Thyroid gland (tissue), 4 donors: ENCODE measurements at regions of chr5 and their contacts with region 1.

Region 1: GRCh38 chr5:59055745-59056448 is 473.0 kb downstream of the RAB3C start:
- DNase-seq: no peak
- H3K4me3 ChIP-seq: no peak overlapping the region
- H3K27ac ChIP-seq: no peak overlapping the region
- H3K4me1 ChIP-seq: no peaks in the 10 kb centered on the region
- H3K27me3 ChIP-seq: no peaks in the 10 kb centered on the region
- CTCF ChIP-seq: no peak
- POLR2A ChIP-seq: no peak

Region 2: GRCh38 chr5:58886315-58887207 is 169.3 kb before region 1 on chr5:
- intact Hi-C with region 1: no loop called
- DNase-seq: peak; percentile 45 to 62
- H3K4me3 ChIP-seq: no peak overlapping the region
- H3K27ac ChIP-seq: peak overlapping the region in 1 of 3 donors; percentile 34
- H3K4me1 ChIP-seq: peaks cover 3 to 5% of the 10 kb centered on the region in 2 donors
- H3K27me3 ChIP-seq: no peaks in the 10 kb centered on the region
- CTCF ChIP-seq: peak; percentile 66 to 95 (median 74)
- POLR2A ChIP-seq: no peak

Region 3: DNA sequence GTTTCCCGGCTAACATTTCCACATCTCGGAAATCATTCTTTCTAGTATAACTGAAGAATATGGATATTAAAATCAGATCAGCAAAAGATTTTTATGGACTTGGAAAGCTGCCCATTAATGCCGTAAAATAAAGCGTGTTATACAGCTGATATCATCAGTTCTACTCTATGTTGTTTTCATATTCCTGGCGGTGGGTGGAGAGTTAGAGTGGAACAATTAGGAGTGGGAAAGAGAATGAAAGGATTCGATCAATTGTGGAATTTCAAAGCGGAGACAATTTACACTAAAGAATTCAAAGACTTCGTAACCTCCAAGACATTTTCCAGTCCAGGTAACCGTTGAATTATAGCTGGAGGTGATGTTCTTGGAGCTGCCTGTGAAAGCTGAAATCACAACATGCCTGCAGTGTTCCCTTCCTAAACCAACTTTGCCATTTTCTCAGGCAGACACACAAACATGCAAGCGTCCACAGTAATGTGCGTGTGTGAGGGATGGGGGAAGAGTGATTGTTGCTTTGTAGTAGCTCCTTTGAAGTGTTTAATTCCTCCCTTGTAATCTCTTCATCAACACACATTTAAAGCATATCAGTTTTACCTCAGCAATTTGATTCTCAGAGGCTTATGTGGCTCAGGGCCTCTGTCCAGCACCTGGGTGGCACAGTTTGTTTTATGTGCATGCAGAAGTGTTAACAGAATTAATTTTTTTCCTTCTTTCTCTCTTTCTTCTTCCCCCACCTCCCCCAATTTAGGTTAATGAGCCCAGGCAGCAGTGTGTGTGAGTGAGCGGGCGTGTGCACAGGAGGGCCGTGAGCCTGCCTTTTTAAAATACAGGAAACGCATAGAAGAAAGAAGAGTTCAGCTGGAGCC is 71.0 kb after region 1 on chr5:
- intact Hi-C with region 1: no loop called
- DNase-seq: peak; percentile 36
- H3K4me3 ChIP-seq: peak overlapping the region in 1 of 3 donors; percentile 16
- H3K27ac ChIP-seq: peak overlapping the region; percentile 90 to 99 (median 96)
- H3K4me1 ChIP-seq: peaks cover 33 to 50% of the 10 kb centered on the region in 2 donors
- H3K27me3 ChIP-seq: no peaks in the 10 kb centered on the region
- CTCF ChIP-seq: no peak
- POLR2A ChIP-seq: peak in 1 of 2 donors; percentile 56

Region 4: GRCh38 chr5:59174248-59174844 is 118.4 kb after region 1 on chr5:
- intact Hi-C with region 1: loop called (anchors 10 kb)
- DNase-seq: peak; percentile 19 to 32
- H3K4me3 ChIP-seq: no peak overlapping the region
- H3K27ac ChIP-seq: no peak overlapping the region
- H3K4me1 ChIP-seq: peaks cover 0 to 1% of the 10 kb centered on the region in 2 donors
- H3K27me3 ChIP-seq: no peaks in the 10 kb centered on the region
- CTCF ChIP-seq: peak; percentile 72 to 88 (median 83)
- POLR2A ChIP-seq: no peak